ENCODE measurements at regions of chr21 and their contacts with region 1.

Region 1: DNA sequence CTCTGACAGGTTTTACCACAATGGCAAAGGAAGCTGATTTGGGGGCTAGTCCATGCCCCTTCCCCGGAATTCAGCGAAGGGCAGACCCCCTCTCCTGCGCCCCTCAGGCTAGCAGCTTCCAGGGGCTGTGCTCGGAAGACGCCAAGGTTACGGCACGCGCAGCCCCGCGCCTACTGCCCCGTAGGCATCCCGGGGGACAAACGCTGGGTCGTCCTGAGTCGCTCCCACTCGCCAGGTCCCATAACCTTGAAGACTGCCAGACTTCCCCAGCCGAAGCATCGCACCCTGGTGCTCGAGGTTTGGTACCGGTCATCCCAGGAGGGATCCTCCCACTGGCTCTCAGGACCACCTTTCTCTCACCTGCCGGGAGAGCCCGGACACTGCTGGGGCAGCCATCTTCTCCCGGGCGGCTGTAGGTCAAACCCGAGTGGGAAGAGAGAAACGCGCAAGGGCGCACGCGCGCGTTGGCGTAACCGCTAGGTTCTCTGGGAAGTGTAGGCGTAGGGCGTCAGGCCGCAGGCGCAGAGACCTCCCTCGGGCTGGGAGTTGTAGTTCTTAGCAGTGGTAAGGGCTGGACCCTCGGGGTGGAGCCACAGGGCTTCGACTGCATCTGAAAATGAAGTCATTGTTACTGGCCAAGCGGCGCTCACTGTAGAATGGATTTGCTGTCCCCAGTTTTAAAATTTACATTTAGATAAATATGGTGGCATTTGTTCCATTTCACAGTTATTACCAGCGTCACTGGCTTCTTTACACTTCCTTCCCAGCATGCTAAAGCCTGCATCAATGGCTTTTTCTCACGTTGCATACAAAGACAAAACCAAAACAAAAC is at the start of gene ATP5PO:
- DNase-seq: peak; percentile 98
- ATAC-seq: peak; percentile 100
- H3K4me3 Mint-ChIP-seq: peak within 1 kb of the TSS; percentile 94
- H3K27ac Mint-ChIP-seq: peak within 1 kb of the TSS; percentile 98
- H3K4me1 Mint-ChIP-seq: peaks cover 29% of the 10 kb centered on the region
- H3K27me3 Mint-ChIP-seq: no peaks in the 10 kb centered on the region
- CTCF ChIP-seq: no peak
- total RNA-seq, gene ATP5PO: 234 to 241 TPM

Region 2: GRCh38 chr21:33854604-33855003 is 61.0 kb before region 1 on chr21:
- CTCF ChIA-PET with region 1: no interaction called
- POLR2A ChIA-PET with region 1: no interaction called
- intact Hi-C with region 1: no loop called
- DNase-seq: no peak
- ATAC-seq: no peak
- H3K4me3 Mint-ChIP-seq: no peak overlapping the region
- H3K27ac Mint-ChIP-seq: no peak overlapping the region
- H3K4me1 Mint-ChIP-seq: no peaks in the 10 kb centered on the region
- H3K27me3 Mint-ChIP-seq: no peaks in the 10 kb centered on the region
- CTCF ChIP-seq: no peak

Region 3: DNA sequence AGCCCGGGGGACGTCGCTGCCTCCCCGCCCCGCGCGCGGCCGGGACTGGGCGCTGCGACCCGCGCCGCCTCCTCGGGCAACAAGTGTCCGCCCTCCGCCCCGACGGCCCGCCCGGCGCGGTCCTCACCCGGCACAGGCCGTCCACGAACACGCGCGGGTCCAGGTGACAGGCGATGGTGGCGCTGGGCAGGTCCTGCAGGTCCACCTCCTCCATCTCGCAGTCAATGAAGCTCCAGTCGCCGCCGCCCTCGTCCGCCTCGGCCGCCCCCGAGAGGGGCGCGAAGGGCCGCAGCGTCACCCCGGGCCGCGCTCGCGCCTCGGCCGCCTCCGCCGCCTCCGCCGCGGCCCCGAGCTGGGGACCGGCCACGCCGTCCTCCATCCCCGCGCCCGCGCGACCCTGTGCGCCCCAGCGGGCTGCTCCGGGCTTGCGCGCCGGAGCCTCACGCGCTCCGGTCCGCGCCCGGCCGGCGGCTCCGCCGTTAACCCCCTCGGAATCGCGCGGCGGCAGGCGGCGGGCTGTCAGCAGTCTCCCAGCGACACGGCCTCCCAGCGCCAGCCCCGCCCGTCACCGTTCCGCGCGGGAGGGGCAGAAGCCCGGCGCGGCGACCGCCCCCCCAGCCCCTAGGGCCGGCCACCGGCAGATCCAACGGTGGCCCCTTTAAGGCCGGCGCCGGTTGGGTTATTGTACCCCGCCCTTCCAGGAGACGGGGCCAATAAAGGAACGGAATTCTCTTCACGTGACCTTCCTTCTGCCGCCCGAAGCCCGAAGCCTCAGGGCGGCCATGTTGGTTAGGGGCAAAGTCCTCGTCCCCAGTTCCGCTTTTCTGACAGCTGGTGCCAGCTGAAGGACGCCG is 699.3 kb after region 1 on chr21 and contains the start of gene RCAN1:
- CTCF ChIA-PET with region 1: no interaction called
- POLR2A ChIA-PET with region 1: no interaction called
- intact Hi-C with region 1: loop called (anchors 10 kb)
- DNase-seq: peak; percentile 89
- ATAC-seq: peak; percentile 97
- H3K4me3 Mint-ChIP-seq: peak within 1 kb of the TSS; percentile 84
- H3K27ac Mint-ChIP-seq: peak within 1 kb of the TSS; percentile 85
- H3K4me1 Mint-ChIP-seq: peaks cover 17% of the 10 kb centered on the region
- H3K27me3 Mint-ChIP-seq: no peaks in the 10 kb centered on the region
- CTCF ChIP-seq: no peak
- total RNA-seq, gene RCAN1: 6.1 to 7.8 TPM

Measured in activated CD8-positive, alpha-beta T cell treated with anti-CD3 and anti-CD28 coated beads for 36 hours (primary cell).